ENCODE measurements at regions of chr14 and their contacts with region 1.

Region 1: GRCh38 chr14:22973217-22974032 is 8.9 kb downstream of the AJUBA start:
- DNase-seq: peak; percentile 36 to 64 (median 42)
- H3K4me3 ChIP-seq: no peak overlapping the region
- H3K27ac ChIP-seq: no peak overlapping the region
- H3K4me1 ChIP-seq: peaks cover 0 to 5% (median 0%) of the 10 kb centered on the region in 4 experiments
- H3K27me3 ChIP-seq: peaks cover 0 to 3% (median 0%) of the 10 kb centered on the region in 5 experiments

Region 2: GRCh38 chr14:22908601-22909000 is 64.8 kb before region 1 on chr14:
- CTCF ChIA-PET with region 1: no interaction called
- POLR2A ChIA-PET with region 1: no interaction called
- DNase-seq: no peak
- H3K4me3 ChIP-seq: no peak overlapping the region
- H3K27ac ChIP-seq: no peak overlapping the region
- H3K4me1 ChIP-seq: no peaks in the 10 kb centered on the region
- H3K27me3 ChIP-seq: no peaks in the 10 kb centered on the region

Region 3: GRCh38 chr14:22945642-22946041 is 27.8 kb before region 1 on chr14:
- CTCF ChIA-PET with region 1: interaction called, 10 read pairs
- POLR2A ChIA-PET with region 1: no interaction called
- DNase-seq: no peak
- H3K4me3 ChIP-seq: no peak overlapping the region
- H3K27ac ChIP-seq: no peak overlapping the region
- H3K4me1 ChIP-seq: no peaks in the 10 kb centered on the region
- H3K27me3 ChIP-seq: no peaks in the 10 kb centered on the region

Region 4: DNA sequence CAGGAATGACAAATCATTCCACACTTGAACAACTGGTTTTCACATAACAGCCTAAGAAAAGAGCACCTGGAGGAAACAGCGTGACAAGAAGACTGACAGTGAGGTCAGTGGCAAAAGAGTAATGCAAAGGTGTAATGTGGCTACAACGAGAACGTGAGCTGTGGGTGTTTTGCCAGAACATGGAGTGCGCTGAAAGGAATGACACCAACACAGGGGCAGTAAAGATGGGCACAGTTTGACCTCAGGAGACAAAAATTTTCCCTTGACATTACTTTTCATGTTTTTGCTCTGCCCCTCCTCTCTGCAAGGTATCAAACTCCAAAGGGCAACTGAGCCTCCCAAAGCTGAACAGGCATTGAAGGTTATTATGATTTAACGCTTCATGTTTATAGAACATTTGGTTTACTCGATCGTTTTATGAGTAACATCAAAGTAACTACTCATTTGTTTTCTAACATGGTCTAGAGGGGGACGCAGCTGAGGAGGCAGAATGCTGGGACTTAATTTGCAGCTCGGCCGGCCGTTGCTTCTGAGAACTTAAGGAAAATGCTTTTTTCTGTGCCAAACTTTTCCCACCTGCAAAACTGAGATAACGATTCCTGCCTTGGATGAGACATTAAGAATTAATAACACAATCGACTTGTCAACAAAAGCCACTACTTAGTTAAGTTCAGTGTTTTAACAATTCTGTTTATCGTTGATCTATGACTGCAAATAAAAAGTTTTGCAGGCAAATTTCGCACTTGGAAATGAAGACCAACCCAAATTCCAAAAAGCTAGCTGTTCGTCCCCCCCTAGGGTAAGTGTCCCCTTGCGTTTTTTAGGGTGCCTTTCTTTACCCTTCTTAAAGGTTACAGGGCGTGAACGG is 17.5 kb before region 1 on chr14:
- CTCF ChIA-PET with region 1: interaction called, 83 read pairs
- POLR2A ChIA-PET with region 1: no interaction called
- DNase-seq: peak in 2 of 3 donors; percentile 5 to 13
- H3K4me3 ChIP-seq: peak overlapping the region; percentile 73 to 95 (median 84)
- H3K27ac ChIP-seq: peak overlapping the region; percentile 33 to 85
- H3K4me1 ChIP-seq: peaks cover 3 to 24% (median 14%) of the 10 kb centered on the region in 4 experiments
- H3K27me3 ChIP-seq: no peaks in the 10 kb centered on the region

Region 5: GRCh38 chr14:22962061-22962676 is 11.3 kb before region 1 on chr14:
- CTCF ChIA-PET with region 1: interaction called, 83 read pairs
- POLR2A ChIA-PET with region 1: no interaction called
- DNase-seq: no peak
- H3K4me3 ChIP-seq: no peak overlapping the region
- H3K27ac ChIP-seq: no peak overlapping the region
- H3K4me1 ChIP-seq: peaks cover 0 to 4% (median 2%) of the 10 kb centered on the region in 4 experiments
- H3K27me3 ChIP-seq: no peaks in the 10 kb centered on the region

Region 6: DNA sequence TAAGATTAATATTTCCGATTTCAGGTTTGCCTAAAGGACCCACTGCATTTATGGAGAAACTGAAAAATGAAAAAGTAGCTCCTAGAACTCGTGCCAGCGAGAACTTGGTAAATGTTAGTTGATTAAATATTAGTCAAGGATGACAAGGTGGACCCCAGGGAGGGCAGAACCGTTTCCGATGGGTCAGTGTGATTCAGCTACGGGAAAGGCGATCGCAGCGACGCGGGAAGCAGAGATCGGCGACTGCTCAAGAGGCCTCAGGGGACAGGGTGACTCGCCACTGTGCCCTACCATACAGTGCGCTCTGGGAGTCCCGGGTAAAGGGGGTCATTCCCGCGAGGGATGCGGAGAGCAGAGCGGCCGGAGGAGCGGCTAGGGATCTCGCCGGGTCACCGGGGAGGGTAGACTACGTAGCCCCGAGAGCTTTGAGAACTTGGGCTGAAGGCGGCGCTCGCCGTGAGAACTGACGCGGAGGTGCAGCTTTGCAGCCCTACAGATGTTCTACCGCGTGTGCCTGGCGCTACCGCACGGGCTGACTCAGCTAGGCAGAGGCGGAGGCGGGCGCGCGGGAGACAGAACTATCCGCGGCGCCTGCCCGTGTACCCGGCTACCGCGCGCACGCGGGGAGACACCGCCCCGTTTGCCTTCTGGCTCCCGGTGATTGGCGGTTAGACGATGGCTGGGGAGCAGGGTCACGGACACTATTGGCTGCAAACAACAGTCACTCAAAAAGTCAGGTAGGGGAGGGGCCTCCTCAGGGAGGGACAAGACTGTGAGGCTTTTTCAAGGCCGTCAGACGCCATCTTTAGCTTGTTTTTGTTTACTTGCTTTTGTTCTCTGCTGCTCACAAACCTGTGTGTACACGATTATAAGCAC is 33.4 kb after region 1 on chr14:
- CTCF ChIA-PET with region 1: interaction called, 14 read pairs
- POLR2A ChIA-PET with region 1: no interaction called
- DNase-seq: peak; percentile 98 to 99 (median 99)
- H3K4me3 ChIP-seq: peak overlapping the region; percentile 47 to 92 (median 86)
- H3K27ac ChIP-seq: peak overlapping the region; percentile 89 to 95
- H3K4me1 ChIP-seq: peaks cover 8 to 34% (median 28%) of the 10 kb centered on the region in 4 experiments
- H3K27me3 ChIP-seq: no peaks in the 10 kb centered on the region